ENCODE measurements at regions of chr5 and their contacts with region 1.

Region 1: DNA sequence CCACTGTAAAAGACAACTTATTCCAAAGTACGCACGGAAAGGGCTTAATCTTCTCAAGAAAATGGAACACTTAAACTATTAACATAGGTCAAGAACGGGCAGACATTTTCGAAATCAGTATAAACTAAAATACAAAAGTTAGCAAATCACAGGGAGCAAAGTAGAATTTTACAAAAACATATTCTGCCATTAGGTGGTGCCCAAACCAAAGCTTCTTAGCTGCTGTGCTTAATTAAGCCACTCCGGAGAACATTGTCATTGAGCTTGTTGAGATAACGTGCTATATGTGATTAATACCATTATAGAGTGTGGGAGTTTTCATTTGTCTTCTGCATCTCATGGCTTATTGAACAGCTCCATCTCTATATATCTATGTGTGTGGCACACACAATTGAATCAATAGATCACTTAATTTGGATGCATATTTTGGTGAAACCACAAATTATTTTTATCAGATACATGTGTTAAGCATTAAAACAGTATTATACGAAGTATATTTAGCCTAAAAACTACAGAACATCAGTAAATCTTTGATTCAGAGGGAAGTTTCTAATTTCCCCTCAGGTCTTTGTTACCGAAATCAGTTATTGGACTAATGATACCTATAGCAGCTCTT is 23.4 kb downstream of the UBLCP1 start:
- DNase-seq: peak in 4 of 5 donors; percentile 29 to 40 (median 33)
- H3K4me3 ChIP-seq: no peak overlapping the region
- H3K4me3 Mint-ChIP-seq: no peak overlapping the region
- H3K27ac ChIP-seq: no peak overlapping the region
- H3K27ac Mint-ChIP-seq: no peak overlapping the region
- H3K4me1 ChIP-seq: no peaks in the 10 kb centered on the region
- H3K4me1 Mint-ChIP-seq: no peaks in the 10 kb centered on the region
- H3K27me3 ChIP-seq: no peaks in the 10 kb centered on the region
- H3K27me3 Mint-ChIP-seq: no peaks in the 10 kb centered on the region

Region 2: DNA sequence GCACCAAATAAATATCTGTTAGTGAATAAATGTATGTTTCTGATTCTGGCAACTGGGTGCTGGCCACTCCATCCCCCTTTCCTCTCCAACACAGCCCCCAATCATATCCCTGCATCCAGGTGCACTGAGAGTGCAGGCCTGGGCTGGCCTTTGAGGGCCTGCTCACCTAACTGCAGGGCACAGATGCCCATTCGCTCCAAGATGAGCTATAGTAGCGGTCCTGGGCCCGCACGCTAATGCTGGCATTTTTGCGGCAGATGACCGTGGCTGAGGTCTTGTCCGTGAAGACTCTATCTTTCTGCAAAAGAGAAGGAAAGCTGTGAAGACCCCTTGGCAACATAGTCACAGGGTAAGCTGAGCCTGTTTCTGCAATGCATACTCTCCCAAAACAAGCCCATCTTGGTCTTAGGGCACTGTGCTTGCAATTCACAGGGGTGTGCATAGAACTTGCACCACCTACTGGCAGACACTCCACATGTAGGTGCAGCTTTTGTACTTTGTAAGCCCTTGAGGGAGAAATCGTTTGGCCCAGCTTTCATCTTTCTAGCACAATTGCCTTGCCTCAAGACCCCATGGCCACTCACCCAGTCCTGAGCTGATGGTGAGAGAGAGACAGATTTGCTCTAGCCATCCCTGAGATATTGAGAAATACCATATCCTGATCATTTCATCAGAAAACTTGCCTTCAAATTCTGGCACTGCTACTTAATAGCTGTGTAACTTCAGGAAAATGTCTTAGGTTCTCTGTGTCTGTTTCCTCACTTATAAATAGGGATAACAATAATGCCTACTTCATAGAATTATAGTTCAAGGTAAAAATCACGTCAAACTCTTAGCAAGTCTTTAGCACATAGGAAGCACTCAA is 30.2 kb after region 1 on chr5:
- CTCF ChIA-PET with region 1: interaction called, 17 read pairs
- POLR2A ChIA-PET with region 1: no interaction called
- intact Hi-C with region 1: no loop called
- DNase-seq: peak in 4 of 5 donors; percentile 22 to 33 (median 29)
- H3K4me3 ChIP-seq: no peak overlapping the region
- H3K4me3 Mint-ChIP-seq: no peak overlapping the region
- H3K27ac ChIP-seq: no peak overlapping the region
- H3K27ac Mint-ChIP-seq: peak overlapping the region in 1 of 7 donors; percentile 81
- H3K4me1 ChIP-seq: no peaks in the 10 kb centered on the region
- H3K4me1 Mint-ChIP-seq: no peaks in the 10 kb centered on the region
- H3K27me3 ChIP-seq: no peaks in the 10 kb centered on the region
- H3K27me3 Mint-ChIP-seq: peaks cover 1 to 9% of the 10 kb centered on the region in 2 donors

Region 3: DNA sequence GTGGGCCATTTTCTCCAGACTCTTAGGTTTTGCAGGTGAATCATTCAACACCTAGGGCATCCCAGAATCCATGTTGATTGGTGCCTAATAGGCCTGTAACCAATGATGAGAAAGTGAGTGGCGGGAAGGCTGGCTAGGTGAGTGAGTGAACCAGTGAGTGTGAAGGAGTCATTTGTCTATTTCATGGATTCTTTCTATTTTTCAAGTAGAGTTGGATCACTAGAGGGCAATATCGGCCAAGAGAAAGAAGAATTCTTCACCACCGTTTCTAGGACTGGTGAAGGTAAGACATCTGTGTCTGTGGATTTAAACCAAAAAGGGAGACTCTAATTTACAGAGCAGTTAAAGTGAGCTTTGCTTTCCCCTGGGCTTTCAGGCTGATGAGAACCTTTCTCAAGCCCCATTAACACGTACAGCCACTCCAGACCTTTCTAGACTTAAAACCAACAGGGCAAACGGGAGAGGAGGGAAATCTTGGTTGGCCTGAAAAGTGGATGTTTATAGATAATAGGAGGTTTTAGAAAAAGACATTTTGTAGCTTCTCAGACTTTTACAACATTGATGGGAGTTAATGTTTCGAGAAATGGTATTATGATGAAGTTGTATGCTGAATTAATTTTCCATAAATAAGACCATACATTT is 158.0 kb after region 1 on chr5:
- CTCF ChIA-PET with region 1: interaction called, 9 read pairs
- POLR2A ChIA-PET with region 1: no interaction called
- intact Hi-C with region 1: loop called (anchors 1 kb)
- DNase-seq: peak in 4 of 5 donors; percentile 26 to 49 (median 32)
- H3K4me3 ChIP-seq: no peak overlapping the region
- H3K4me3 Mint-ChIP-seq: no peak overlapping the region
- H3K27ac ChIP-seq: no peak overlapping the region
- H3K27ac Mint-ChIP-seq: peak overlapping the region in 1 of 7 donors; percentile 35
- H3K4me1 ChIP-seq: no peaks in the 10 kb centered on the region
- H3K4me1 Mint-ChIP-seq: peaks cover 0 to 6% (median 5%) of the 10 kb centered on the region in 4 donors
- H3K27me3 ChIP-seq: no peaks in the 10 kb centered on the region
- H3K27me3 Mint-ChIP-seq: no peaks in the 10 kb centered on the region

Region 4: DNA sequence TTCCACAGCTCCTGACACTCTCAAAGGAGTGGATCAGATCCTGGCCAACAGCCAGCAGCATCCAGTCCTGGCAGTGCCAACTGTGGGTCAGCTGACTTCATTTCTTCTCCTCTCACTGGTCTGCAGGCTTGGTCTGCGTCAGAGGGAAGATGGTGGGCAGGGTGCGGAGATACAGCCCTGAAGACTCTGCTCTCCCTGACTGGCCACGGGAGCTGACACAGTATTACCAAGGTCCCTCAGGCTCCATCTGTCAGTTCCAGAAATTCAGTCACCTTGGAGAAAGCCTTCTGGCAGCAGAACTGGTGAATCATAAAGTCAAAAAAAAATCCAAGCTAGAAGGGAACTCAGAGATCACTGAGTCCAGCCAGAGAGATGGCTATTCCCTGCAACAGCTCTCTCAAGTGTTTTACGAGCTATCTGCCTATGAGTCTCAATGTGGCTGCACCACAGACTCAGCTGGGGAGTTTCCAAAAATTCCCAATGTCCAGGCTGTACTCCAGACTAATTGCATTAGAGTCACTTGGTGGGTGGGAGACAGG is 1055.9 kb after region 1 on chr5:
- CTCF ChIA-PET with region 1: no interaction called
- POLR2A ChIA-PET with region 1: no interaction called
- intact Hi-C with region 1: loop called (anchors 1 kb)
- DNase-seq: no peak
- H3K4me3 ChIP-seq: no peak overlapping the region
- H3K4me3 Mint-ChIP-seq: no peak overlapping the region
- H3K27ac ChIP-seq: no peak overlapping the region
- H3K27ac Mint-ChIP-seq: no peak overlapping the region
- H3K4me1 ChIP-seq: no peaks in the 10 kb centered on the region
- H3K4me1 Mint-ChIP-seq: no peaks in the 10 kb centered on the region
- H3K27me3 ChIP-seq: no peaks in the 10 kb centered on the region
- H3K27me3 Mint-ChIP-seq: peaks cover 2 to 3% of the 10 kb centered on the region in 2 donors